ENCODE measurements at regions of chr17 and their contacts with region 1.

Region 1: DNA sequence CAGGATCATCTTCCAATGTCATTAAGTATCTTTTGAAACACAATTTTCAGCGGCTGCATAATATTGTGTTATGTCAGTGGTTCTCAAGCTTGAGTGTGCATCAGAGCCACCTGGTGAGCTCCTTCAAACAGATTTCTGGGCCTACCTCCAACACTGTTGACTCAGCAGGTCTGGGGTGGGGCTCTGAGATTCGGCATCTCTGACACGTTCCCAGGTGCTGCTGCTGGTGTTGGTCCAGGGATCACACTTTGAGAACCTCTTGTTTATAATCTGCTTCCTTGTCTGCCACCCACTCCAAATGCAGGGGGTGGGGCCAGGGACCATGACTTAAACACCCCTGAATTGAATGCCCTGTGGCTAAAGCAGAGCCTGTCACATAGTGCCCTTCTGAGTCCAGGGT is 73.8 kb upstream of the HNF1B start:
- DNase-seq: no peak
- ATAC-seq: no peak
- H3K4me3 Mint-ChIP-seq: no peak overlapping the region
- H3K27ac Mint-ChIP-seq: no peak overlapping the region
- H3K4me1 Mint-ChIP-seq: peaks cover 36% of the 10 kb centered on the region
- H3K27me3 Mint-ChIP-seq: peaks cover 13% of the 10 kb centered on the region
- CTCF ChIP-seq: no peak

Region 2: GRCh38 chr17:37373530-37374159 is 445.0 kb before region 1 on chr17:
- CTCF ChIA-PET with region 1: interaction called, 3 read pairs
- POLR2A ChIA-PET with region 1: no interaction called
- intact Hi-C with region 1: loop called (anchors 10 kb)
- DNase-seq: peak; percentile 22
- ATAC-seq: peak; percentile 92
- H3K4me3 Mint-ChIP-seq: no peak overlapping the region
- H3K27ac Mint-ChIP-seq: no peak overlapping the region
- H3K4me1 Mint-ChIP-seq: peaks cover 4% of the 10 kb centered on the region
- H3K27me3 Mint-ChIP-seq: no peaks in the 10 kb centered on the region
- CTCF ChIP-seq: no peak

Region 3: DNA sequence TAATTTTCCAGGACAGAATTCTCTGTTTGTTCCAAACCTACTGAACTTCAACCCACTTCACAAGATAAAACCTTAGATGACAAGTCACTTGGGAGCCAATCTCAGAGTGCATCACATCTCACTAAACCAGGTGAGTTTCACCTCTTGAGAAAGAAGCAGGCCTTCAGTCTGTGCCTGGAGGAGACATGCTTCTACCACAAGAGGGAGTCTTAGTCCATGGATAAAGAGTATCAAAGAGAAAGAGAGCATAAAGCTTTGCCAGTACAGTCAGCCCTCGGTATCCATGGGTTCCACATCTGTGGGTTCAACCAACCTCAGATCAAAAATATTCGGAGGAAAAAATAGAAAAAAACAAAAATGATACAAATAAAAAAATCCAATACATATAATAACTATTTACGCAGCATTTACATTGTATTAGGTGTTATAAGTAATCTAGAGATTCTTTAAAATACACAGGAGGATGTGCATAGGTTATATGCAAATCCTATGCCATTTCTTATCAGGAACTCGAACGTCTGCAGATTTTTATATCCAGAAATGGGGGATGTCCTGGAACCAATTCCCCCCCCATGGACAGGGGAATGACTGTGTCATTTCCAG is 291.3 kb before region 1 on chr17:
- CTCF ChIA-PET with region 1: interaction called, 14 read pairs
- POLR2A ChIA-PET with region 1: no interaction called
- intact Hi-C with region 1: loop called (anchors 1 kb)
- DNase-seq: no peak
- ATAC-seq: peak; percentile 37
- H3K4me3 Mint-ChIP-seq: no peak overlapping the region
- H3K27ac Mint-ChIP-seq: no peak overlapping the region
- H3K4me1 Mint-ChIP-seq: no peaks in the 10 kb centered on the region
- H3K27me3 Mint-ChIP-seq: no peaks in the 10 kb centered on the region
- CTCF ChIP-seq: no peak

Region 4: DNA sequence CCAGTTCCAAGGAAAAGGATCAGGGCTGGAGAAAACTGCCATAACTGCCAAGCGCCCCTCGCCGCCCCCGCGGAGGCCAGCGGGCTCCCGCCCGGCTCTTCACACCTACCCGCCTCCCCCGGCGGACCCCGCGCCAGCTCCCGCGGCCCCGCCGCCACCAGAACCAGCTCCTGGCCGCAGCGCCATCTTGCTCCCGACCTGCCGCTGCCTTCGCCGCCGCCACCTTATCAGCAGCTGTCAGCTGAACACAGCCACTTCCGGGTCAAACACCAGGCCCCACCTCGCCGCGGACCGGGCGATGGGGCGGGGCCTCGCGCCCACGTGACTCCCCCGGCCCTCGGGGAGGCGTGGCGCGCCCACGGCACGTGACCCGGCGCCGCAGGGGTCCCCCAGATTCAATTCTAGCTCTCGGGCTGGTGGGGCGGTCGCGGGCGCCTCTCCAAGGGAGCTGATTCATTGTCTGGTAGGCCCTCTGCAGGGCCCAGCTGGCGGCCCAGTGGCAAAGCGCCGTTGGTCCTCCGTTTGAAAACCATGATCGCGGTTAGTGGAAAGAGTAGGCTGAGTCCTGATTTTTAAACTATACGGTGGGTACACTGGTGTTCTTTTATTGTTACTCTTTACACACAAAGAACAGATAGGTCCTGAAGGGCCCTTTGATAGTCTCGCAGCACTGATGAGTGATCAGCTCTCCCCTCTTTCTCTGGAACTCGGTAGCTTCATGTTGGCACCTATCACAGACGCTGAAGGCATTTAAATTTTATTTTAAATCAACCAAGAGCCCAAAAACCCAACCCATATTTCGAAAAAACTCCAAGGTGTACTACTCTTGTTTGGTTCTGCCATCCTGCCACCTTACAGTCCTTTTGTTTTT is 209.3 kb before region 1 on chr17 and contains the start of gene SYNRG:
- CTCF ChIA-PET with region 1: interaction called, 10 read pairs
- POLR2A ChIA-PET with region 1: interaction called, 6 read pairs
- intact Hi-C with region 1: no loop called
- DNase-seq: peak; percentile 98
- ATAC-seq: peak; percentile 85
- H3K4me3 Mint-ChIP-seq: peak within 1 kb of the TSS; percentile 94
- H3K27ac Mint-ChIP-seq: peak within 1 kb of the TSS; percentile 92
- H3K4me1 Mint-ChIP-seq: peaks cover 42% of the 10 kb centered on the region
- H3K27me3 Mint-ChIP-seq: no peaks in the 10 kb centered on the region
- CTCF ChIP-seq: no peak
- total RNA-seq, gene SYNRG: 83.7 and 89.8 TPM in 2 replicates

Region 5: GRCh38 chr17:37643118-37643766 is 175.4 kb before region 1 on chr17 and contains the start of gene DDX52:
- CTCF ChIA-PET with region 1: interaction called, 7 read pairs
- POLR2A ChIA-PET with region 1: no interaction called
- intact Hi-C with region 1: loop called (anchors 5 kb)
- DNase-seq: peak; percentile 78
- ATAC-seq: peak; percentile 99
- H3K4me3 Mint-ChIP-seq: peak within 1 kb of the TSS; percentile 95
- H3K27ac Mint-ChIP-seq: peak within 1 kb of the TSS; percentile 90
- H3K4me1 Mint-ChIP-seq: peaks cover 38% of the 10 kb centered on the region
- H3K27me3 Mint-ChIP-seq: peaks cover 9% of the 10 kb centered on the region
- CTCF ChIP-seq: no peak
- total RNA-seq, gene DDX52: 35.6 and 39.9 TPM in 2 replicates

Region 6: DNA sequence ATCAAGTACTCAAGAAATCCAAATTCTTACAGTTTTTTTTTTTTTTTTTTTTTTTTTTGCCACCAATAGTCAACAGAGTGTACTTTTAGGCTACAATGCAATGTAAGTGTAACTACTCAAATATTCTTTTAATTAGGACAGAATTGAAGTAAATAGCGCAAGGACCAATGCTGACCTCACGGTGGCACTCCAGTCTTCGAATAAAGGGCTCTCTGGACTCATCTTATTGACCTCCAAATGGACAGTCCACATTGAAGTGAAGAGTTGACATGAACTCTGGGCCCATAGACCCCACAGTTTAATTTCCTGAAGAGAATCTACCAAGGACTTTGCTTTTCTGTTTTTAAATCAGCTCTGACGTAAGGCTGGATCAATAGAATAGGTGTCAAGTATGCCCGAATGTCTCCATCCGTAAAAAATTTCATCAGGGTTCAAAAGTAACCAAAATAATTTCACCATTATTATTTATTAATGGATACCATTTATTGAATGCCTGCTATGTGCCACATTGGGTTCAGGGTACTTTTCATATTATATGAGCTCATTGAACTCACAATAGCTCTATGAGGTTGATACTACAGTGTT is 168.2 kb before region 1 on chr17:
- CTCF ChIA-PET with region 1: interaction called, 14 read pairs
- POLR2A ChIA-PET with region 1: no interaction called
- intact Hi-C with region 1: no loop called
- DNase-seq: no peak
- ATAC-seq: no peak
- H3K4me3 Mint-ChIP-seq: no peak overlapping the region
- H3K27ac Mint-ChIP-seq: no peak overlapping the region
- H3K4me1 Mint-ChIP-seq: no peaks in the 10 kb centered on the region
- H3K27me3 Mint-ChIP-seq: peaks cover 33% of the 10 kb centered on the region
- CTCF ChIP-seq: no peak

Region 7: GRCh38 chr17:37701496-37701898 is 117.2 kb before region 1 on chr17:
- CTCF ChIA-PET with region 1: interaction called, 14 read pairs
- POLR2A ChIA-PET with region 1: no interaction called
- intact Hi-C with region 1: loop called (anchors 1 kb)
- DNase-seq: peak; percentile 44
- ATAC-seq: peak; percentile 84
- H3K4me3 Mint-ChIP-seq: peak overlapping the region; percentile 76
- H3K27ac Mint-ChIP-seq: peak overlapping the region; percentile 57
- H3K4me1 Mint-ChIP-seq: peaks cover 17% of the 10 kb centered on the region
- H3K27me3 Mint-ChIP-seq: peaks cover 6% of the 10 kb centered on the region
- CTCF ChIP-seq: peak; percentile 84

Region 8: GRCh38 chr17:38752119-38752929 is 933.6 kb after region 1 on chr17 and contains the start of gene PSMB3:
- CTCF ChIA-PET with region 1: no interaction called
- POLR2A ChIA-PET with region 1: no interaction called
- intact Hi-C with region 1: no loop called
- DNase-seq: peak; percentile 87
- ATAC-seq: peak; percentile 89
- H3K4me3 Mint-ChIP-seq: peak within 1 kb of the TSS; percentile 98
- H3K27ac Mint-ChIP-seq: peak within 1 kb of the TSS; percentile 93
- H3K4me1 Mint-ChIP-seq: peaks cover 54% of the 10 kb centered on the region
- H3K27me3 Mint-ChIP-seq: peaks cover 25% of the 10 kb centered on the region
- CTCF ChIP-seq: no peak
- total RNA-seq, gene PSMB3: 234 and 250 TPM in 2 replicates

Measured in activated B cell treated with CpG ODN at 0.5 μM for 24 hours (primary cell).